Activated CD8-positive, alpha-beta T cell treated with anti-CD3 and anti-CD28 coated beads for 36 hours (primary cell): ENCODE measurements at regions of chr17 and their contacts with region 1.

Region 1: GRCh38 chr17:75271233-75271954 is 363 bp upstream of the MIF4GD start:
- DNase-seq: peak; percentile 87
- ATAC-seq: peak; percentile 91
- H3K4me3 Mint-ChIP-seq: peak overlapping the region; percentile 86
- H3K27ac Mint-ChIP-seq: peak overlapping the region; percentile 81
- H3K4me1 Mint-ChIP-seq: peaks cover 32% of the 10 kb centered on the region
- H3K27me3 Mint-ChIP-seq: no peaks in the 10 kb centered on the region
- CTCF ChIP-seq: peak; percentile 66

Region 2: DNA sequence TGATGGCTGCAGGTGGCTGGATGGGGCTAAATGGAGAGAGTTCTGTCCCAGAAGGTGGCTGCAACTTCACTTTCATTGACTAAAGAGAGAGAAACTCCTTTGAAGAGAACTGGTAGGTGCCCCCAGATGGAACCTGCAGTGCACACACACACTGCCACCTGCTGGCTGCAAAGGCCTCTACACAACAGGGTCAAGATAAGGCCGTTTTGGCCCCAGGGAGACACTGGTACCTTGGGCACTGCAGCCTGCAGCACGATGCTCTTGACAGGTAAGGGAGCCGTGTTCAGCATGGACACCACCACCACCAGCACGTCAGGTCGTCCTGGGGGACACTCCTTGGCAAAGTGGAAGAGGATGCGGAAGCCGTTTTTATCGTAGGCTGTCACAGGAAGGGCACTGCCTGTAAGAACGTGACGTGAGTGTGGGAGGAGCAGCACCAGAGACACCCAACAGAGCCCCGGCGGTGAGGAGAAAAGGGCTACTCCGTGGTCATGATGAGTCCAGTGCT is 32.7 kb before region 1 on chr17:
- CTCF ChIA-PET with region 1: interaction called, 53 read pairs
- POLR2A ChIA-PET with region 1: interaction called, 10 read pairs
- intact Hi-C with region 1: no loop called
- DNase-seq: peak; percentile 73
- ATAC-seq: peak; percentile 66
- H3K4me3 Mint-ChIP-seq: no peak overlapping the region
- H3K27ac Mint-ChIP-seq: peak overlapping the region; percentile 76
- H3K4me1 Mint-ChIP-seq: peaks cover 36% of the 10 kb centered on the region
- H3K27me3 Mint-ChIP-seq: no peaks in the 10 kb centered on the region
- CTCF ChIP-seq: peak; percentile 73

Region 3: GRCh38 chr17:75250009-75250471 is 21.4 kb before region 1 on chr17:
- CTCF ChIA-PET with region 1: interaction called, 53 read pairs
- POLR2A ChIA-PET with region 1: interaction called, 25 read pairs
- intact Hi-C with region 1: no loop called
- DNase-seq: peak; percentile 92
- ATAC-seq: peak; percentile 97
- H3K4me3 Mint-ChIP-seq: peak overlapping the region; percentile 64
- H3K27ac Mint-ChIP-seq: peak overlapping the region; percentile 93
- H3K4me1 Mint-ChIP-seq: peaks cover 67% of the 10 kb centered on the region
- H3K27me3 Mint-ChIP-seq: no peaks in the 10 kb centered on the region
- CTCF ChIP-seq: no peak

Region 4: DNA sequence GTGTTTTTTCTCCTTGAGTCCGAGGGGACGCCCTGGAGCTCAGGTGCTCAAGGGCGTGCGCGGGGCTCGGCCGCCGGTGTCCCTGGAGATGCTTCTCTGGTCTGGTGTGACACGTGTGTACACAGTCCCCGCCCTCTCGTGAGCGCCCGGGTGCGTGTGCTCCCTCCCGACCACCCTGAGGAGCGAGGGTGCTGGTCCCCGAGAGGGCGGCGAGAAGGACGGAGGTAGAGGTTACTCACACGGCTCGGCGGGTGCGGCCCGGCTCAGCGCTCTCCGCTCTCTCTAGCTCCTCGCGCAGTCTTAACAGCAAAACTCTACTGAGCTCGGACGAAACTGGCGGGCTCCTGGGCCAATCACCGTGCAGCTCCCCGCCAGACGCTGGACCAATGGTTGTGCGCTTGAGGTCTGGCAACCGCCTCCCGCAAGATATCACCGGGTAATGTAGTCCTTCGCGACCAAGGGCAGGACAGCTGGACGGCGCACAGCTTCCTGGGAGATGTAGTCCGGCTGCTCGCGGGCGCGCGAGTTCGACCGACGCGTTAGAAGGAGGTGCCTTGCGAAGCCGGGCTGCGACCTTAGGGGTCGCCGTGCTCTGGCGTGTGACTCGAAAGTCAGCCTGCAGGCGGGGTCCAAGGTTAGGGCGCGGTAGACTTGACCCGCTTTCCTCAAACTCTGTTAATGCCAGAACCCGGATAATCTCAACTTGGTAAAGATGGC is 17.9 kb after region 1 on chr17 and contains the start of gene SLC25A19:
- CTCF ChIA-PET with region 1: interaction called, 43 read pairs
- POLR2A ChIA-PET with region 1: interaction called, 78 read pairs
- intact Hi-C with region 1: no loop called
- DNase-seq: peak; percentile 99
- ATAC-seq: peak; percentile 93
- H3K4me3 Mint-ChIP-seq: peak within 1 kb of the TSS; percentile 89
- H3K27ac Mint-ChIP-seq: peak within 1 kb of the TSS; percentile 100
- H3K4me1 Mint-ChIP-seq: peaks cover 26% of the 10 kb centered on the region
- H3K27me3 Mint-ChIP-seq: no peaks in the 10 kb centered on the region
- CTCF ChIP-seq: no peak
- total RNA-seq, gene SLC25A19: 55.1 to 55.2 TPM

Region 5: DNA sequence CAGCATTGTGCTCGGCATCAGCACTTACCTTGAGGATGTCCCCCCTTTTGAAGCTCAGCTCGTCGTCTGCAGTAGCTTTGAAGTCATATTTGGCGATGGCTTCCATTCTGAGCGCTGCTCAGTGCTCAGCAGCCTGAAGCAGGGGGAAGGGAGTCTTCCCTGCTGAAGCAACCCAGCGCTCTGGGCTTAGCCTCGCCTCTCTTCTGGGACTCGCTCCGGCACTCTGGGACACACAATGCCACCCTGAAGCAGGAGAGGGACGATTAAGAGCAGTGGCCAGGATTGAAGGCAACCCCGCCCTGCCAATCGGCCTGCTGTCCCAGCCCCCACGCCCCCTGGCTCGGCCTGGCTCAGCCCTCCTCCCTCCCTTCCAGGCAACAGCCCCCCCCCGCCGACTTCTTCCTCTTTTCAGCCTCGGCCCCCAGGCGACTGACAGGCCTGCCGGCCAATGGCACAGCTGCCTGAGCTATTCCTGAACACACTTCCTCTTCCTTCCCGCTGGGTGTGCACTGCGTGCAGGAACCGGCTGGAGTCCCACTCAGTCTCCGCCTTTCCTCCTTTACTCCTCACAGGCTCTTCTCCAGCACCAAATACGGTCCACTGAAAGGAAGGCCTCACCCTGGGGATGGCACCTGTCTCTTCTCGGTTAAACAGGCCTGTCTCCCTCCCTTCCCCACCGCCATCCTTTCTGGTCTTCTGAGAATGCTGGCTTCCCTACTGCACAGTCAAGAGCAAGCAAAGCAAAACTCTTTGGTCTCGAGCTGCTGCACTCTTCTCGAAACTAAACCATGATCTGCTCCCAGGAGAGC is 122.3 kb after region 1 on chr17:
- CTCF ChIA-PET with region 1: interaction called, 5 read pairs
- POLR2A ChIA-PET with region 1: interaction called, 14 read pairs
- intact Hi-C with region 1: no loop called
- DNase-seq: peak; percentile 90
- ATAC-seq: peak; percentile 90
- H3K4me3 Mint-ChIP-seq: peak overlapping the region; percentile 96
- H3K27ac Mint-ChIP-seq: peak overlapping the region; percentile 78
- H3K4me1 Mint-ChIP-seq: peaks cover 72% of the 10 kb centered on the region
- H3K27me3 Mint-ChIP-seq: no peaks in the 10 kb centered on the region
- CTCF ChIP-seq: no peak

Region 6: DNA sequence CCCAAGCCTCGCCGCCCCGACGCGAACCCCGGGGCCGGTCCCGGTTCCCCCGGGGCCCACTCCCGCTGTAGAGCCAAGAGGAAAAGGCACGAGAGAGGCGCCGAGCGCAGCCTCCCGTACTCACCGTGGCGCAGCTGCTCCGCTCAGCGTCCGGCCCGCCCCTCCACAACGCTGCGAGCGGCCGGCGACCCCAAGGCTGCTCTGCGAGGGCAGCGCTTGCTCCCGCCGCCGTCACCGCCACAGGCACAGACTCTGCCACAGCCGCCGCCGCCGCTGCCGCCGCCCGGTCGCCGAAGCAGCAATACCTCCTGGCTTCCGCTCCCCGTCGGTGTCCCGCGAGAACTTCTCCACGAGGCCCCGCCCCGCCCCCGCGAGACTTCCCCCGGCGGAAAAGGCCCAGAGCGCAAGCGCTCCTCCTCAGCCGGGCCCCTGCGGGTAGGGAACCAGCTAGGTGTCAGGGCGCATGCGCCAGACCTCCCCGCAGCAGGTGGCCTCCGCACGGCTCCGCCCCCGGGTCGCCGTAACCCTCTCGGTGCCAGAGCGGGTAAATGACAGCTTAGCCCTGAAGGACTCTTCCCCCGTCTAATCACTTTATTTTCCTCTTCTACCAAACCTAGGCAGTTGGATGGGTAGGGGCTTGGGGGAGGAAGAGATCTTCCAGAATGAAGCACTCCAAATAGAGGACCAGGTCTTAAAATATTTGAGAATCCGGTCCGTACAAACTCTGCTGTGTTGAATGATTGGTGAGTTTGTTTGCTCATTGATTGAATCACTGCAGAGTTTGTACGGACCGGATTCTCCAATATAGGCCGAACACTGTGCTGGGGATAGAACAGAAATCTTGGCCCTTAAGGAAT is 134.2 kb after region 1 on chr17 and contains the start of gene GRB2:
- CTCF ChIA-PET with region 1: interaction called, 12 read pairs
- POLR2A ChIA-PET with region 1: interaction called, 13 read pairs
- intact Hi-C with region 1: no loop called
- DNase-seq: peak; percentile 99
- ATAC-seq: peak; percentile 88
- H3K4me3 Mint-ChIP-seq: peak within 1 kb of the TSS; percentile 99
- H3K27ac Mint-ChIP-seq: peak within 1 kb of the TSS; percentile 99
- H3K4me1 Mint-ChIP-seq: peaks cover 34% of the 10 kb centered on the region
- H3K27me3 Mint-ChIP-seq: no peaks in the 10 kb centered on the region
- CTCF ChIP-seq: no peak
- total RNA-seq, gene GRB2: 167 to 179 TPM